ENCODE measurements at regions of chrX and their contacts with region 1.

Region 1: DNA sequence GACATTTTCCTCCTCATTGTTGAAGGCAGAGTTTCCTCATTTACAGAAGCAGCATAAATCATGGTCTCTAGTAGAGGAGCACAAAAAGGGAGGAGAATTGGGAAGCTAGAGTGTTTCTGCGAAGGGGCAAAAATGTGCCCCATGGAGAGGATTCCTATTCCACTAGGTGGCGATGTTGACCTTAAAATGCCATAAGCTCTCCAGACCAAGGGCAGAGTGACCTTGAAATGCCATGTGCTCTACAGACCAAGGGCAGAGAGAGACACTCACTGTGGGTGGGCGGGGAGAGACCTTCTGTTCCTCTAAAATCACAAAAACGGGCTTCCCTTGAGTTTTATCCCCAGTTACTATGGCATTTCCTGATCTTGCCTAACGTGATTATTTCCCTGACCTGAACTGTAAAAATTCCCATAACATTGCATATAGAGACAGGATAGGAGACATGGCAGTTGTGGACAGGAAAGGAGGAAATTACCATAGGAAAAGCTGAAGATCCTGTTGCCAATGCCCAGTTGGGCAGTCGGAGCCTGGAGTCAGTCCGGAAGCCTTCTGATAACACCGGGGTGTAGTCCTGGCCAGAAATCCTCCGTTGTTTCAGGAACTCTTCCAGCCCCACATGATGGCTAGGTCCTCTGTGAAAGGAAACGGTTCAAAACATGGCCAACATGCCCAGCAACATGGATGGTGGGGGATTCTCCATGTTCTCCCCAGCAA is 567.7 kb downstream of the MAGEB5 start:
- DNase-seq: peak; percentile 5
- H3K4me3 ChIP-seq: no peak overlapping the region
- H3K27ac ChIP-seq: no peak overlapping the region
- H3K4me1 ChIP-seq: no peaks in the 10 kb centered on the region
- H3K27me3 ChIP-seq: peaks cover 1% of the 10 kb centered on the region
- CTCF ChIP-seq: peak; percentile 44 to 69

Region 2: DNA sequence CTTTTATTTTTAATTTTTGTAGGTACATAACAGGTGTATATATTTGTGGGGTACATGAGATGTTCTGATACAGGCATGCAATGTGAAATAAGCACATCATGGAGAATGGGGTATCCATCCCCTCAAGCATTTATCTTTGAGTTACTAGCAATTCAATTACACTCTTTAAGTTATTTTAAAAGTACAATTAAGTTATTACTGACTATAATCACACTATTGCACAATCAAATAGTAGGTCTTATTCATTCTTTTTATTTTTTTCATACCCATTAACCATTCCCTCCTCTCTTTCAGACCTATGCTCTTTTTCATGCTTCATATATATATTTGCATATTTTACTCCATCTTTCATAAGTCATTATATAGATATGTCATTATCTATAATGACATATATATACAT is 474.4 kb before region 1 on chrX:
- CTCF ChIA-PET with region 1: no interaction called
- dilution Hi-C with region 1: no loop called
- in situ Hi-C with region 1: no loop called
- intact Hi-C with region 1: no loop called
- DNase-seq: no peak
- H3K4me3 ChIP-seq: no peak overlapping the region
- H3K27ac ChIP-seq: no peak overlapping the region
- H3K4me1 ChIP-seq: no peaks in the 10 kb centered on the region
- H3K27me3 ChIP-seq: no peaks in the 10 kb centered on the region
- CTCF ChIP-seq: no peak

Region 3: GRCh38 chrX:26651755-26652154 is 131.9 kb before region 1 on chrX:
- CTCF ChIA-PET with region 1: no interaction called
- dilution Hi-C with region 1: no loop called
- in situ Hi-C with region 1: no loop called
- intact Hi-C with region 1: loop called (anchors 10 kb)
- DNase-seq: no peak
- H3K4me3 ChIP-seq: no peak overlapping the region
- H3K27ac ChIP-seq: no peak overlapping the region
- H3K4me1 ChIP-seq: no peaks in the 10 kb centered on the region
- H3K27me3 ChIP-seq: no peaks in the 10 kb centered on the region
- CTCF ChIP-seq: peak; percentile 36 to 52

Region 4: DNA sequence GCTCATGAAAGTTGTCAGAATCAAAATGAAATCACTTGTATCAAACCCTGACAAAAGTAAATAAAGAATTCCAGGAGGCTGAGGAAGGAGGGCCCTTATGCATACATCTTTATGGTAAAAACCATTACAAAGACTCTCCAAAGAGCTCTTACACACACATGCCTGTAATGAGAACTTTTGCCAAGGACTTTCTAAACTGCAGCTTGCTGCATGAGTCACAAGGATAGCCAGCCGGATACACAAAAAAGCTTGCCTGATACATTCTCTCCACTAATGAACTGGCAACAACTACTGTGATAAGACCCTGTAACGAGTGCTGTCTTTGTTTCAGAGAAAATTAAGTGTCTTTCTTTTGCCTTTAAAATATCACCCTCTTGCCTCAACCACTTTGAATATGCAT is 61.4 kb after region 1 on chrX:
- CTCF ChIA-PET with region 1: no interaction called
- dilution Hi-C with region 1: no loop called
- in situ Hi-C with region 1: no loop called
- intact Hi-C with region 1: loop called (anchors 10 kb)
- DNase-seq: no peak
- H3K4me3 ChIP-seq: no peak overlapping the region
- H3K27ac ChIP-seq: no peak overlapping the region
- H3K4me1 ChIP-seq: no peaks in the 10 kb centered on the region
- H3K27me3 ChIP-seq: no peaks in the 10 kb centered on the region
- CTCF ChIP-seq: no peak

Region 5: DNA sequence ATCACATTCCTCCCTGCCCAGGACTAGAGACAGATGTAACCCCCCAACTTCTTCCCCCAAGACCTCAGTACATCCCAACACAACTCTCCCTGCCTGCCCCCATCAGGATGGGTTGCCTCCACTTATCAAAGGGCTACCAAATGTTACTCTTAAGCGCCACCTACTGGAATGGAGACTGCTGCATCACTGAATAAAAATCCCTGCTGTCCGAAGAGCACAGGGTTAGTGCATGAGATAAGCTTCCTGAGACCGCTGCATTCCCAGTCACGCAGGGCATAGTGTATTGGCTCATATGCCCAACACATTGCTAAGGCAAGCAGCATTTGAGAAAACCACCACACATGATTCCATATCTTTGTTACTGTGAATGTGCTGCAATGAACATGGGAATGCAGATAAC is 135.0 kb after region 1 on chrX:
- CTCF ChIA-PET with region 1: no interaction called
- dilution Hi-C with region 1: no loop called
- in situ Hi-C with region 1: no loop called
- intact Hi-C with region 1: loop called (anchors 1 kb)
- DNase-seq: peak; percentile 9
- H3K4me3 ChIP-seq: no peak overlapping the region
- H3K27ac ChIP-seq: no peak overlapping the region
- H3K4me1 ChIP-seq: peaks cover 16% of the 10 kb centered on the region
- H3K27me3 ChIP-seq: no peaks in the 10 kb centered on the region
- CTCF ChIP-seq: peak; percentile 52 to 69

Region 6: GRCh38 chrX:27186664-27187063 is 403.0 kb after region 1 on chrX:
- CTCF ChIA-PET with region 1: no interaction called
- dilution Hi-C with region 1: no loop called
- in situ Hi-C with region 1: loop called in 1 of 2 experiments (anchors 25 kb)
- intact Hi-C with region 1: loop called (anchors 1 kb)
- DNase-seq: peak; percentile 34
- H3K4me3 ChIP-seq: no peak overlapping the region
- H3K27ac ChIP-seq: no peak overlapping the region
- H3K4me1 ChIP-seq: no peaks in the 10 kb centered on the region
- H3K27me3 ChIP-seq: no peaks in the 10 kb centered on the region
- CTCF ChIP-seq: peak; percentile 81

Region 7: GRCh38 chrX:27399146-27399456 is 615.4 kb after region 1 on chrX:
- CTCF ChIA-PET with region 1: no interaction called
- dilution Hi-C with region 1: no loop called
- in situ Hi-C with region 1: no loop called
- intact Hi-C with region 1: loop called (anchors 5 kb)
- DNase-seq: no peak
- H3K4me3 ChIP-seq: no peak overlapping the region
- H3K27ac ChIP-seq: no peak overlapping the region
- H3K4me1 ChIP-seq: no peaks in the 10 kb centered on the region
- H3K27me3 ChIP-seq: no peaks in the 10 kb centered on the region
- CTCF ChIP-seq: no peak